ENCODE measurements at regions of chr1 and their contacts with region 1.

Region 1: GRCh38 chr1:175124861-175125260 is 57.2 kb downstream of the TNN start:
- DNase-seq: no peak
- H3K4me3 Mint-ChIP-seq: no peak overlapping the region
- H3K27ac Mint-ChIP-seq: no peak overlapping the region
- H3K4me1 Mint-ChIP-seq: no peaks in the 10 kb centered on the region
- H3K27me3 Mint-ChIP-seq: no peaks in the 10 kb centered on the region

Region 2: DNA sequence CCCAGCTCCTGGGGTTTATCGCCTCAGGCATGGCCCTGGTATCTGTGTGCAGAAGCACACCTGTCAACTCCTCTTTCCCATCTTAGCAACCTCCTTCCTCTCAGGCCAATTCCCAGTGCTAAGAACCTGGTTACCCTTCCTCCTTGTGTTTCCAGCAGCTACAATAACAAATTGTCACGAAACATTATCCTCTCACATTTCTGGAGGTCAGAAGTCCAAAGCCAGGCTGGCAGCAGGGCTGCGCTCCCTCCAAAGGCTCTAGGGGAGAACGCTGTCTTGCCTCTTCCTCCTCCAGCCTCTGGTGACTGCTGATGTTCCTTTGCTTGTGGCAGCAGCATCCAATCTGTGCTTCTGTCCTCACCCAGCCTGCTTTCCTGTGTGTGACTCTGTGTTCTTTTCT is 90.9 kb before region 1 on chr1:
- CTCF ChIA-PET with region 1: interaction called, 11 read pairs
- POLR2A ChIA-PET with region 1: no interaction called
- DNase-seq: no peak
- H3K4me3 Mint-ChIP-seq: no peak overlapping the region
- H3K27ac Mint-ChIP-seq: no peak overlapping the region
- H3K4me1 Mint-ChIP-seq: peaks cover 11% of the 10 kb centered on the region
- H3K27me3 Mint-ChIP-seq: no peaks in the 10 kb centered on the region

Region 3: DNA sequence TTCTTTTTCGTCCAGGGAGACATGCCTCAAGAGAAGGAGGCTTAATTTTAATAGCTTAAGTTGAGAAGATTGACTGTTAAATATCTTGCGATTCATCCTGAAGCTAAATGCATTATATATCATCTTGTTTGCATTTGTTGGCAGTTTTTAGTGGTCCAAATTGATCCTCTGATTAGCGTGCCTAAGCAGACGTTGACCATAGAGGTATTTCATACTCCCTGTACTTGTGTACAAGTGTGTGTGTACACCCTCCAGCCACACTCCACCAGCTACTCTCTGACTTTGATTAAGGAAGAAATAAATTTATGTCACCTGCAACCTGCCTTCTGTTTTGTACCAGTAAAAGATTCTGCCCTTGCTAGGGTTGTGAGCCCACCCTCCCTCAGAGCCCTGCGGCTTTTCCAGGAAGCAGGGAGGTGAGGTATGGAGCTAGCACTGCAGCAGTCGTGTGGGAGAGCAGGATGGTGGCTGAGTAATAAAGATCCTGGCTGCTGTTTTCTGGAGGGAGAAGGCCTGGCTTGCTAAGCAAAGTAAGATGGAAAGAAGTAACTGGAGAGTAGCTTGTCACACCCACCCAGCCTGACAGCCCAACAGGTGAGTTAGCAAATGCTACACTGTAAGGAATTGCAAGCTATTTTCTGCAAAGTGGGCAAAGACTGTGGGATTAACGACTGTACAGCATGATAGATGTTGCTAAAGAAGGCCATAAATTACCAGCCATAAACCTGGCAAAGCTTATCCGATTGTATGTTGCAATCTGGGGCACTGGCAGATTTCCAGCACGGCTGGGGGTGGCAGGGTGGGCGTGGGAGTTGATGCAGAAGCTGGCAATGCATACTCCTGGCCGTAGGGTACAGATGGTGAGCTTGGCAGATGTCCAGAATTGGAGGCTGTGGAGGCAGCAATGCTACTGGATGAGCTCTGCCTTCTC is 448.3 kb after region 1 on chr1:
- CTCF ChIA-PET with region 1: no interaction called
- POLR2A ChIA-PET with region 1: no interaction called
- DNase-seq: no peak
- H3K4me3 Mint-ChIP-seq: no peak overlapping the region
- H3K27ac Mint-ChIP-seq: no peak overlapping the region
- H3K4me1 Mint-ChIP-seq: no peaks in the 10 kb centered on the region
- H3K27me3 Mint-ChIP-seq: peaks cover 9% of the 10 kb centered on the region

Measured in activated CD4-positive, alpha-beta T cell treated with anti-CD3 and anti-CD28 coated beads, Interleukin-2, amount 10 ng/mL, durations not matched to agents 7 days and 5 days (primary cell).